Panc1 (cell line): ENCODE measurements at regions of chr19 and their contacts with region 1.

Region 1: GRCh38 chr19:56245067-56245740 is 27.3 kb upstream of the EDDM13 start:
- DNase-seq: no peak
- ATAC-seq: no peak; the same call in 1 of the 2 replicates
- H3K4me3 ChIP-seq: no peak overlapping the region
- H3K27ac ChIP-seq: no peak overlapping the region
- H3K4me1 ChIP-seq: no peaks in the 10 kb centered on the region
- H3K27me3 ChIP-seq: no peaks in the 10 kb centered on the region
- CTCF ChIP-seq: no peak

Region 2: DNA sequence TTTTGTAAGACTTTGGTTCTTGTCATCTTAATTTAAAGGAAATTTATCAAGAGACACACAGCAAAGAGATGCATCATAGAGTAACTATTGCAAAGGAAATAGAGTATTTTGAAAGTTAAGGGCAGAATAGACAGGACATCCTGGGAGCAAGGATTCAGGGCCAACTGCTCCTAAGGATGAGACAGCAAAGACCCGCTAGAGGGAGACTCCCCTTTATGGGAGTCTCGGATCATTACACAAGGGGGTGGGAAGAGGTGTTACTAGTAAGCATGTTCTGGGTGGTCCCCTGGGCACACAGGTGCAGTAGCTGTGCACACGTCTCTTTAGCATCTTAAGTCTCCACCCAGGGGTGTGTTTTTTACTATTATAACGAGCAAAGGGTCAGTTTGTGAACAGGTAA is 33.5 kb before region 1 on chr19:
- CTCF ChIA-PET with region 1: no interaction called
- POLR2A ChIA-PET with region 1: no interaction called
- in situ Hi-C with region 1: loop called (anchors 5 kb)
- intact Hi-C with region 1: no loop called
- DNase-seq: no peak
- ATAC-seq: no peak
- H3K4me3 ChIP-seq: no peak overlapping the region
- H3K27ac ChIP-seq: no peak overlapping the region
- H3K4me1 ChIP-seq: no peaks in the 10 kb centered on the region
- H3K27me3 ChIP-seq: no peaks in the 10 kb centered on the region
- CTCF ChIP-seq: no peak; the same call in 1 of the 2 replicates

Region 3: GRCh38 chr19:56611288-56611687 is 366.1 kb after region 1 on chr19:
- CTCF ChIA-PET with region 1: no interaction called
- POLR2A ChIA-PET with region 1: no interaction called
- in situ Hi-C with region 1: no loop called
- intact Hi-C with region 1: no loop called
- DNase-seq: no peak
- ATAC-seq: no peak
- H3K4me3 ChIP-seq: no peak overlapping the region
- H3K27ac ChIP-seq: no peak overlapping the region
- H3K4me1 ChIP-seq: no peaks in the 10 kb centered on the region
- H3K27me3 ChIP-seq: no peaks in the 10 kb centered on the region
- CTCF ChIP-seq: no peak